ENCODE measurements at regions of chr13 and their contacts with region 1.

Region 1: DNA sequence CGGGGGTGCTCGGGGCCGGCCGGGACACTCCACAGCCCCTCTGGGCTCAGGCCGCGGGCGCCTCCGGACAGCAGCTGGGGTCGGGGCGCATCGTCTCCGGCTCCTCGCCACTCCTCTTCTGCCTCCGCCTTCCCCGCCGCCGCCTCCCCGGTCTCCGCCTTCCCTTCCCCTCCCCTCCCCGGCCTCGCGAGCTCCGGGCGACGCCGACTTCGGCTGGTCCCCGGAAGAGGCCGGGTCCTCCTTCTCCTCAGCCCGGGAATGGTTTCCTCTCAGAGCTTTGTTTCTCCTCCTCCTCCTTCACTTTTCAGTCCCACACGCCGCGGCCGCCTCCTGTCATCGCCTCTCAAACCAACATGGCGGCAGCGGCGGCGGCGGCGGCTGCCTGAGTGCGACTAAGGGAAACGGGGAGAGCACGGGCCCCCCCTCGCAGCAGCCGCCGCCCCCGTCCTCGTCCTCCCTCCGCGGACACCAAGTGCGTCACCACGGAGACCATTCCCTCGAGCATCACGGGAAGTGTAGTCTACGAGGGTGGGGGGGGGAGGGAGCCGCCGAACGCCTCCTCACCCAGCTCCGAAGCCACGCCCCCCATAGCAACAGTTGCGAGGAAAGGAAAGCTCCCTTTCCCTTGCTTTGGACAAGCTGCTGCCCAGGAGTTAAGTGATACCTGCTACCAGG is at the start of gene UBL3:
- DNase-seq: peak; percentile 96
- H3K4me3 Mint-ChIP-seq: peak within 1 kb of the TSS; percentile 83
- H3K27ac Mint-ChIP-seq: peak within 1 kb of the TSS; percentile 97
- H3K4me1 Mint-ChIP-seq: peaks cover 28% of the 10 kb centered on the region
- H3K27me3 Mint-ChIP-seq: no peaks in the 10 kb centered on the region
- total RNA-seq, gene UBL3: 8.3 to 8.5 TPM

Region 2: GRCh38 chr13:29324601-29325000 is 525.8 kb before region 1 on chr13:
- CTCF ChIA-PET with region 1: no interaction called
- intact Hi-C with region 1: no loop called
- DNase-seq: no peak
- H3K4me3 Mint-ChIP-seq: no peak overlapping the region
- H3K27ac Mint-ChIP-seq: no peak overlapping the region
- H3K4me1 Mint-ChIP-seq: no peaks in the 10 kb centered on the region
- H3K27me3 Mint-ChIP-seq: peaks cover 4% of the 10 kb centered on the region

Region 3: DNA sequence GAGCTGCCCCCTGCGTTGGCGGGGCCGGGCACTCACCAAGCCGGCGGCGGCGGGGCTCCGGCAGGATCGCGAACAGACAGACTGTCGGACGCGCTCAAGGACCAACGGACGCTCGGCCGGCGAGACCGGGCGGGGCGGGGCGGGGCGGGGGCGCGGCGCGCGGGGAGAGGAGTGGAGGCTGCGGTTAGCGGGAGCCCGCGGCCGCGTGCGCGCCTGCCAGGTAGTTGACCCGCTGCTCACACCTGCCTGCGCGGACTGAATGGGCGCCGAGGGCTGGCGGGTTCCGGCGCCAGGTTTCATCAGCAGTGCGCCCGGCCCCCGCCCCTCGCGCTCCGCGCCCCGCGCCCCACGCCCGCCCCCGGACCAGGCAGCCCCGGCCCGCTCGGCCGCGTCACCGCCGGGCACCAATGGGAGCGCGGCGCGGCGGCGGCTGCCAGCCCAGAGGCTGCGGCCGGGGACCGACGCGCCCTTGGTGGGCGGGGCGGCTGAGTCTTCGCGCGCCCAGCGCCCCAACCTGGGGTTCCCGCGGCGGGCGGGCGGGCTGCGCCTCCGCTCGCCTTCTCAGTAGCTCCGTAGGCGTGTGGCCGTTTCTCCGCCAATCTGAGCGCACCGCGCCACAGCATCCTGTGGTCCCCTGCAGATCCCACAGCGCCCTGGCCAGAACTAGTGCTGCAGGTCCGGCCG is 254.8 kb before region 1 on chr13 and contains the start of gene SLC7A1:
- CTCF ChIA-PET with region 1: no interaction called
- intact Hi-C with region 1: loop called (anchors 1 kb)
- DNase-seq: peak; percentile 84
- H3K4me3 Mint-ChIP-seq: peak within 1 kb of the TSS; percentile 90
- H3K27ac Mint-ChIP-seq: peak within 1 kb of the TSS; percentile 95
- H3K4me1 Mint-ChIP-seq: peaks cover 39% of the 10 kb centered on the region
- H3K27me3 Mint-ChIP-seq: no peaks in the 10 kb centered on the region
- total RNA-seq, gene SLC7A1: 115 to 119 TPM

Region 4: GRCh38 chr13:29801737-29802305 is 48.5 kb before region 1 on chr13:
- CTCF ChIA-PET with region 1: interaction called, 3 read pairs
- intact Hi-C with region 1: loop called (anchors 5 kb)
- DNase-seq: no peak
- H3K4me3 Mint-ChIP-seq: no peak overlapping the region
- H3K27ac Mint-ChIP-seq: no peak overlapping the region
- H3K4me1 Mint-ChIP-seq: peaks cover 23% of the 10 kb centered on the region
- H3K27me3 Mint-ChIP-seq: no peaks in the 10 kb centered on the region

Region 5: DNA sequence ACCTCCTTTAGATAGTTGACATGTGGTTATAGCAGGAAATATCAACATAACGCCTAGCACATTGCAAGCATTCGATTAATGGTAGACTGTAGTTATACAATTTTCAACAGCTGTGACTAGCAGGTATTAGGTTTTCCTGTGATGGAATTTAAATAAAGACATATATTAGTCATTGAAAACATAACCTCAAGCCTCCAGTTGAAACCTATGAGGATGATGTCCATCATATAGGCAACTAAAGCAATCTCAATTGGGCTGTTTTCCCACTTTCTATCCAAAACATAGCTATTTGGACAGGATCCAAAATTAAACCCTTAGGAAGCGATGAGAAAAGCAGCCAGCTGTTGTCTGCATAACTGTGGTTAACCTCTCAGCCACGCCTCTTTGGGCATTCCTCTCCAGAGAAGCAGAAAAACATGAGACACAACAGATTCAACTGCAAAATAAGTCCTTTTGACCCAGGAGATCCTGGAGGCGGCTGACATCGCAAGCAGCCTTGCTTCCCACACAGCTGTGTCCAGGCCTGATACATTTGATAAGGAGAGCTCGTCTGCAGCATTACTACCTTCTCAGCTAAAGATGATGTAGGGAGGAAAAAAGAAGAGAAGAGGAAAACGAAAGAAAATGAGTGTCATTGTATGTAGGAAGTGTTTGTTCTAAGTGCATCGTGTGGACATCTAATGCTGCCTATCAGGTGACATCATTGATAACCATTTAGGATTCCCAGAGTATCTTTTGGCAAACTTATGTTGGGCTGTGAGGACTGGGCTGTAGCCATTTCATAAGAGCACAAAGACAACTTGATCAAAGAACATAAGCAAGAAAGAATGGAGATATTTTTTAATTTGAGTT is 52.0 kb after region 1 on chr13:
- CTCF ChIA-PET with region 1: no interaction called
- intact Hi-C with region 1: loop called (anchors 2 kb)
- DNase-seq: peak; percentile 53
- H3K4me3 Mint-ChIP-seq: peak overlapping the region; percentile 39
- H3K27ac Mint-ChIP-seq: no peak overlapping the region
- H3K4me1 Mint-ChIP-seq: peaks cover 22% of the 10 kb centered on the region
- H3K27me3 Mint-ChIP-seq: no peaks in the 10 kb centered on the region

Region 6: GRCh38 chr13:30004204-30004603 is 153.8 kb after region 1 on chr13:
- CTCF ChIA-PET with region 1: no interaction called
- intact Hi-C with region 1: no loop called
- DNase-seq: no peak
- H3K4me3 Mint-ChIP-seq: no peak overlapping the region
- H3K27ac Mint-ChIP-seq: no peak overlapping the region
- H3K4me1 Mint-ChIP-seq: peaks cover 11% of the 10 kb centered on the region
- H3K27me3 Mint-ChIP-seq: no peaks in the 10 kb centered on the region

Region 7: DNA sequence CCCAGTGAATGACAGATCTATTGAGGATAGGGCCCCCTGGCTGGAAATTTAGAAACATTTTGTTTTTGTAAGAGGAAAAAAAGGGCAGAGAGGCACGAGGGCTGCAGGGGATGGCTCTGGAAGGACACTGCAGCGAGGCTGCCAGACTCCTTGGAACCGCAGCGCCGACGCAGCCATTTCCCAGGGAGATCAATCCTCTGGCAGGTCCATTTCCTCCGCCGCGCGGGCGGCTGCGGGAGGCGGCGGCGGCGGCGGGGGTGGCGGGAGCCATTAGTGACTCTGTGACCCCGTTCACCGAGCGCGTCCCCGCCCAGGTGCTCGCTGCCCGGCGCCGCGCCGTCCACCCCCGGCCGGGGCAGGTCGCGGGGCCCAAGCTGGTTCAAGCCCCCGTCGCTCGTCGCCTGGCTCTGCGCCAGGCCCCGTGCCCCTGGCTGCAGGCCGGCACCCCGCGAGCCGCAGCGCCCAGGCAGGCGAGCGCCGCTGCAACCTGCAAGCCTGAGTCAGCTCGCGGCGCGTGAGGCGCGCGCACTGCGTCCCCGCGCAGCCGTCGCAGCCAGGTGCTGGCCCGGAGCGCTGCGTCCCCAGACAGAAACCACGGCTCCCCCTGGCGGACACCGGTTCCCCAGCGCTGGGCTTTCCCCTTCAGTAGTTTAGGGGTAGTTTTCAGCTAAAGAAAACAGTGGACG is 264.4 kb after region 1 on chr13:
- CTCF ChIA-PET with region 1: interaction called, 60 read pairs
- intact Hi-C with region 1: loop called (anchors 1 kb)
- DNase-seq: peak; percentile 94
- H3K4me3 Mint-ChIP-seq: peak overlapping the region; percentile 69
- H3K27ac Mint-ChIP-seq: no peak overlapping the region
- H3K4me1 Mint-ChIP-seq: peaks cover 36% of the 10 kb centered on the region
- H3K27me3 Mint-ChIP-seq: no peaks in the 10 kb centered on the region

Region 8: GRCh38 chr13:30617315-30618185 is 767.2 kb after region 1 on chr13 and contains the start of gene USPL1:
- CTCF ChIA-PET with region 1: no interaction called
- intact Hi-C with region 1: loop called (anchors 1 kb)
- DNase-seq: peak; percentile 98
- H3K4me3 Mint-ChIP-seq: no peak within 1 kb of the TSS
- H3K27ac Mint-ChIP-seq: no peak within 1 kb of the TSS
- H3K4me1 Mint-ChIP-seq: peaks cover 29% of the 10 kb centered on the region
- H3K27me3 Mint-ChIP-seq: no peaks in the 10 kb centered on the region
- total RNA-seq, gene USPL1: 10.7 to 11.3 TPM

Measured in activated naive CD4-positive, alpha-beta T cell treated with anti-CD3 and anti-CD28 coated beads for 36 hours (primary cell).